Heart right ventricle (tissue), 16 donors: ENCODE measurements at regions of chr1 and their contacts with region 1.

Region 1: DNA sequence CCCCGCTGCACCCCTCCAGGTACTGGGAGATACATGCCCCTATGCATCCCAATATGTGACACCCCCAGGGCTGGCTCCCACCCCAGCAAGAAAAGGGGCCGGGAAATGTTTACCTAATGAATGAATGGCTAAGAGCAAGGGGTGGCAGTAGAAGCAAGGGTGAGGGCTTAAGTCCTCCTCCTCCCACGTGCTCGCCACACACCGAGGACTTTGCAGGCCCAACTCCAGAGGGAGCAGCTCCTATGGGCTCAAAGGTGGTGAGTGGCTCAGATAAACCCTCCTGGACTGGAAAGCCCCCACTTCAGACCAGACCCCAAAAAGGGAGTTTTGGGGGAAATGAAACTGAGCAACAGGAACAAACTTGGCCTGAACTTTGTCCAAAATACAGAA is 11.4 kb downstream of the SLC45A3 start:
- DNase-seq: no peak
- ATAC-seq: no peak
- H3K4me3 ChIP-seq: no peak overlapping the region
- H3K27ac ChIP-seq: no peak overlapping the region
- H3K4me1 ChIP-seq: peaks cover 0 to 36% (median 12%) of the 10 kb centered on the region in 9 donors
- H3K27me3 ChIP-seq: peaks cover 0 to 3% (median 0%) of the 10 kb centered on the region in 7 donors
- CTCF ChIP-seq: no peak

Region 2: GRCh38 chr1:205335643-205336091 is 333.3 kb before region 1 on chr1:
- intact Hi-C with region 1: no loop called
- DNase-seq: peak; percentile 69 to 70
- ATAC-seq: peak; percentile 46 to 85 (median 77)
- H3K4me3 ChIP-seq: no peak overlapping the region
- H3K27ac ChIP-seq: no peak overlapping the region
- H3K4me1 ChIP-seq: no peaks in the 10 kb centered on the region
- H3K27me3 ChIP-seq: peaks cover 0 to 4% (median 0%) of the 10 kb centered on the region in 7 donors
- CTCF ChIP-seq: peak; percentile 33 to 95 (median 84)

Region 3: GRCh38 chr1:205700865-205701401 is 32.0 kb after region 1 on chr1:
- intact Hi-C with region 1: loop called in 4 of 10 experiments (anchors 5 kb)
- DNase-seq: peak; percentile 24 to 31
- ATAC-seq: peak; percentile 58 to 84 (median 74)
- H3K4me3 ChIP-seq: no peak overlapping the region
- H3K27ac ChIP-seq: peak overlapping the region in 1 of 10 donors; percentile 40
- H3K4me1 ChIP-seq: peaks cover 5 to 31% (median 17%) of the 10 kb centered on the region in 9 donors
- H3K27me3 ChIP-seq: peaks cover 0 to 5% (median 0%) of the 10 kb centered on the region in 7 donors
- CTCF ChIP-seq: no peak

Region 4: GRCh38 chr1:205711104-205712020 is 42.4 kb after region 1 on chr1:
- intact Hi-C with region 1: loop called in 3 of 10 experiments (anchors 5 kb)
- DNase-seq: peak in 1 of 2 donors; percentile 79
- ATAC-seq: peak; percentile 76 to 87 (median 80)
- H3K4me3 ChIP-seq: no peak overlapping the region
- H3K27ac ChIP-seq: peak overlapping the region in 1 of 10 donors; percentile 24
- H3K4me1 ChIP-seq: peaks cover 0 to 41% (median 22%) of the 10 kb centered on the region in 9 donors
- H3K27me3 ChIP-seq: no peaks in the 10 kb centered on the region
- CTCF ChIP-seq: peak; percentile 76 to 94 (median 90)